Activated B cell treated with CpG ODN at 0.5 μM for 24 hours (primary cell): ENCODE measurements at regions of chr11 and their contacts with region 1.

Region 1: DNA sequence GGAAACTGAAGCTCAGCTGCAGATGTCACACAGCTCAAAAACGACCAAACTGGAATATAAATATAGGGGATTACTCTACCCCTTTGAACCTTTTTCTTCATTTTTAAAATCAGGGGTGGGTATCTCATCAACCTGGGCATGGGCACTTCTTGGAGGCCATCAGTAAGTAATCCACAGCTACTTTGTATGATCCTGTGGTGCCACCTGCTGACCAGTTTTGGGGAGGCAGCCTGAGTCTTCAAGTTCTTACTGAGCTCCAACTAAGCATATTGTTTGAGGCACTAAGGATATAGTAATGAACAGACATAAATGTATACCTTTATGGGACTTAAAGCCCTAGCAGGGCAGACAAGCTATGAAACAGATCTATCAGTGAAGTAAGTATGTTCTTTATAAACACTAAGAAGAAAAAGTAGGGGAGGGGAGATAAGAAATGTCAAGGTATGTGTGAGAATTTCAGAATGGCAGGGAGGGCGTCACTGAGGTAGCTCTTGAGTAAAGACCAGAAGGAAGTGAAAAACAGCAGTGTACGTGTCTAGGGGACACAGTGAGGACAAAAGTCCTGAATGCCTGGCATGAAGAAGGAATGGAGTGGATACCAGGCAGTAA is 18.4 kb downstream of the TUB start:
- DNase-seq: peak; percentile 39
- ATAC-seq: peak; percentile 67
- H3K4me3 Mint-ChIP-seq: no peak overlapping the region
- H3K27ac Mint-ChIP-seq: no peak overlapping the region
- H3K4me1 Mint-ChIP-seq: no peaks in the 10 kb centered on the region
- H3K27me3 Mint-ChIP-seq: no peaks in the 10 kb centered on the region
- CTCF ChIP-seq: no peak

Region 2: DNA sequence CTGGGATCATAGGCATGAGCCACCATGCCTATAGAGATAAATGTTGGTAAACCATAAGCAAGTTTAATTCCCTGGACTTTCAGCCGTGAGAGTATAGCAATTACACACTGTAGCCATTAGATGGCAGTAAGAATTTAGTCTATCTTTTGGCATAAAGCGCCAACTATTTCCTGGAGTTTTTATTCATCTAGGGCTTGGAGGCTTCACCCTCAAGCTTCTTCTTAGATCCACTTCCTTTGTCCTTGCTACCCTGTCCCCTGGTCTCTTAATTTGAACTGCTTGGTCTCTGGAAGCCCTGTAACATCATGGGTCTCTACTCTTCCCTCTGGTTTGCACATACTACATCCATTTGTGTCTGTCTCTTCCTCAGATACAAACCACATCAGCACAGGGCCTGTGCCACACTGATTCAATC is 206.5 kb before region 1 on chr11:
- CTCF ChIA-PET with region 1: no interaction called
- POLR2A ChIA-PET with region 1: no interaction called
- intact Hi-C with region 1: loop called (anchors 2 kb)
- DNase-seq: no peak
- ATAC-seq: peak; percentile 65
- H3K4me3 Mint-ChIP-seq: no peak overlapping the region
- H3K27ac Mint-ChIP-seq: no peak overlapping the region
- H3K4me1 Mint-ChIP-seq: peaks cover 21% of the 10 kb centered on the region
- H3K27me3 Mint-ChIP-seq: peaks cover 7% of the 10 kb centered on the region
- CTCF ChIP-seq: no peak

Region 3: DNA sequence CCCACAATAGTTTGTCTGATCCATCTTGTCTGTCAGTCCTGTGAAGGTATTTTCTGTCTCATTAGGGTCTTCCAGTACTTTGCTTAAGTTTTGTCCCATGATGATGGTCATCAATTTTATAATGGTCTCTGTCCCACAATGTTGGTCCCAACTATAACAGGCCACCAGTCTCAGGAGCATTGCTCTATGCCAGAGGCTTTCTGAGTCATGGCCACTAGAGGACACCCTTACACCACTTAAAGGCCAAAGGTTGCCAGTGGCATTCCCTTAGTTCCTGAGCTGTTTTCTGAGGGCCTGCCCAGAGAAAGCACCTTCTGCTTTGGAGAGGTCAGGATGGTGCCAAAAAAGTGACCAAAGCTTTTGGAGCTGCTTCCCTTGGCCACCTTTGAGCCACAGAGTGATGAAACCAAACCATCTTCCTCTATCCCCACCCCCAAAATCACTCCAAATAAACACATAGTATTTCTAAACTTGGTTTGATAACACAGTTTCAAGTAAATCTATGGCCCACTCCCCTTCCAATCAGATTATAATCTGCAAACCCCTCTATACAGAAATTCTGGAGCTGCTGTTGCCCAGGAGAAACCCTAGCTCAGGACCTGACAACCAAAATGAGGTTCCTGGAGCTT is 92.9 kb before region 1 on chr11:
- CTCF ChIA-PET with region 1: interaction called, 86 read pairs
- POLR2A ChIA-PET with region 1: no interaction called
- intact Hi-C with region 1: loop called (anchors 1 kb)
- DNase-seq: no peak
- ATAC-seq: peak; percentile 62
- H3K4me3 Mint-ChIP-seq: no peak overlapping the region
- H3K27ac Mint-ChIP-seq: no peak overlapping the region
- H3K4me1 Mint-ChIP-seq: no peaks in the 10 kb centered on the region
- H3K27me3 Mint-ChIP-seq: peaks cover 4% of the 10 kb centered on the region
- CTCF ChIP-seq: no peak

Region 4: GRCh38 chr11:8033305-8034105 is 65.9 kb before region 1 on chr11:
- CTCF ChIA-PET with region 1: interaction called, 30 read pairs
- POLR2A ChIA-PET with region 1: no interaction called
- intact Hi-C with region 1: loop called (anchors 1 kb)
- DNase-seq: peak; percentile 36
- ATAC-seq: peak; percentile 75
- H3K4me3 Mint-ChIP-seq: no peak overlapping the region
- H3K27ac Mint-ChIP-seq: no peak overlapping the region
- H3K4me1 Mint-ChIP-seq: peaks cover 6% of the 10 kb centered on the region
- H3K27me3 Mint-ChIP-seq: peaks cover 29% of the 10 kb centered on the region
- CTCF ChIP-seq: peak; percentile 44

Region 5: GRCh38 chr11:8056810-8057463 is 42.5 kb before region 1 on chr11:
- CTCF ChIA-PET with region 1: no interaction called
- POLR2A ChIA-PET with region 1: no interaction called
- intact Hi-C with region 1: no loop called
- DNase-seq: no peak
- ATAC-seq: no peak
- H3K4me3 Mint-ChIP-seq: no peak overlapping the region
- H3K27ac Mint-ChIP-seq: no peak overlapping the region
- H3K4me1 Mint-ChIP-seq: no peaks in the 10 kb centered on the region
- H3K27me3 Mint-ChIP-seq: no peaks in the 10 kb centered on the region
- CTCF ChIP-seq: no peak

Region 6: GRCh38 chr11:8080674-8081590 is 18.5 kb before region 1 on chr11 and contains the start of gene TUB:
- CTCF ChIA-PET with region 1: interaction called, 12 read pairs
- POLR2A ChIA-PET with region 1: no interaction called
- intact Hi-C with region 1: no loop called
- DNase-seq: no peak
- ATAC-seq: peak; percentile 31
- H3K4me3 Mint-ChIP-seq: peak within 1 kb of the TSS; percentile 62
- H3K27ac Mint-ChIP-seq: no peak within 1 kb of the TSS
- H3K4me1 Mint-ChIP-seq: peaks cover 7% of the 10 kb centered on the region
- H3K27me3 Mint-ChIP-seq: peaks cover 54% of the 10 kb centered on the region
- CTCF ChIP-seq: no peak
- total RNA-seq, gene TUB: not detected in 2 replicates

Region 7: GRCh38 chr11:8087185-8087584 is 12.2 kb before region 1 on chr11:
- CTCF ChIA-PET with region 1: interaction called, 14 read pairs
- POLR2A ChIA-PET with region 1: no interaction called
- intact Hi-C with region 1: no loop called
- DNase-seq: no peak
- ATAC-seq: no peak
- H3K4me3 Mint-ChIP-seq: no peak overlapping the region
- H3K27ac Mint-ChIP-seq: no peak overlapping the region
- H3K4me1 Mint-ChIP-seq: no peaks in the 10 kb centered on the region
- H3K27me3 Mint-ChIP-seq: peaks cover 29% of the 10 kb centered on the region
- CTCF ChIP-seq: no peak

Region 8: DNA sequence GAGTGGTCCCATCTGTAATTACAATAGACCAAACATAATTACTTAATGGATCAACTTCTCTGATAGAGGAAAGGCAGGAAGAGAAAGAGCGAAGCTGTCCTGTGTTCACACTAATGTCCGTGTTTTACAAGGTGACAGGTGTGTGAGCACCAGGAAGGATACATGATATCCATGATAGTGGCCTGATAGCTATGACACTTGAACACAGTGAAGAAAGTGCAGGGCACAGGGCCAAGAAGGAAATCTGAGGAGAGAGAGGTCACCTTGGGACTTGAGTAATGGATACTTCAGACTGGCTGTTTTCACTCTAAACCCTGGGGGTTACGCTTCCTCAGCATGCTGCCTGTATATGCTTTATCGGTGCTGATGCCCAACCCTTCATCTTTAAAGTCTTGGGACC is 11.0 kb after region 1 on chr11:
- CTCF ChIA-PET with region 1: interaction called, 26 read pairs
- POLR2A ChIA-PET with region 1: no interaction called
- intact Hi-C with region 1: no loop called
- DNase-seq: no peak
- ATAC-seq: no peak
- H3K4me3 Mint-ChIP-seq: no peak overlapping the region
- H3K27ac Mint-ChIP-seq: no peak overlapping the region
- H3K4me1 Mint-ChIP-seq: no peaks in the 10 kb centered on the region
- H3K27me3 Mint-ChIP-seq: no peaks in the 10 kb centered on the region
- CTCF ChIP-seq: no peak